Esophagus muscularis mucosa (tissue), 4 donors: ENCODE measurements at regions of chr9 and their contacts with region 1.

Region 1: GRCh38 chr9:136283291-136284235 is 20.3 kb downstream of the CCDC187 start:
- DNase-seq: no peak
- H3K4me3 ChIP-seq: peak overlapping the region; percentile 27 to 45 (median 34)
- H3K27ac ChIP-seq: no peak overlapping the region
- H3K4me1 ChIP-seq: peaks cover 5 to 10% (median 9%) of the 10 kb centered on the region in 4 donors
- H3K27me3 ChIP-seq: peaks cover 0 to 87% (median 7%) of the 10 kb centered on the region in 4 donors
- CTCF ChIP-seq: peak; percentile 75 to 86 (median 75)
- EP300 ChIP-seq: no peak
- POLR2A ChIP-seq: no peak

Region 2: DNA sequence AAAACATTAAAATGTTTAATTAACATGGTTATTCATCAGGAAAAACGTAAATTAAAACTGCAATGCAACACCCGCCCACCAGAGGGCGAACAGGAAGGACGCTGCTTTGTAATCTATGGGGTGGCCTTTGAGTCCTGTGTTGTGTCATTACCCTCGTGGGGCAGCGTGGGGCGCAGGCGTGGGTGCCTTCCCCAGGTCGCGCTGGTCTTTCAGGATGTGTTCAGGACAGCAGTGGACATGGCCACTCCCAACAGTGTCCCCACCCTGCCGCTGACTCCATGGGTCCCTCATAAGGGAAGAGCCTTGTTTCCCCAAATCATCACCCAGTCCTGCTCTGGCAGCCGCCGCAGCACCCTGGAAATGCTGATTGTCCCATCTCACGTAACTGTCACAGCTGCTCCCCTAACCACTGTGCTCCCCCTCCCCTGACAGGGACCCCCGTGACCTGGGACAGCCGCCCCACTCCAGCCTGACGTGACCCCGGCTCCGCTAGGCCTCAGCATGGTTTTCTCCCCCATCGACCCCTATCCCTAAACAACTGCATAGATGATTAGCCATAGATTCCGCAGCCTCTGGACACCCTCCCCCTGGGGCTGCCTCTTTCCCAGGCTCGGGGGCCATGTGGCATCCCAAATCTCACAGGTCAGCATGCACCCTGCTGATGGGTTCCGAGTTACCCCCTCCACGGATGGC is 680.6 kb before region 1 on chr9:
- intact Hi-C with region 1: loop called (anchors 10 kb)
- DNase-seq: no peak
- H3K4me3 ChIP-seq: no peak overlapping the region
- H3K27ac ChIP-seq: no peak overlapping the region
- H3K4me1 ChIP-seq: peaks cover 0 to 6% (median 2%) of the 10 kb centered on the region in 4 donors
- H3K27me3 ChIP-seq: peaks cover 0 to 53% (median 2%) of the 10 kb centered on the region in 4 donors
- CTCF ChIP-seq: peak; percentile 41 to 72 (median 63)
- EP300 ChIP-seq: no peak
- POLR2A ChIP-seq: no peak